Calu3 (cell line): ENCODE measurements at regions of chr2 and their contacts with region 1.

Region 1: DNA sequence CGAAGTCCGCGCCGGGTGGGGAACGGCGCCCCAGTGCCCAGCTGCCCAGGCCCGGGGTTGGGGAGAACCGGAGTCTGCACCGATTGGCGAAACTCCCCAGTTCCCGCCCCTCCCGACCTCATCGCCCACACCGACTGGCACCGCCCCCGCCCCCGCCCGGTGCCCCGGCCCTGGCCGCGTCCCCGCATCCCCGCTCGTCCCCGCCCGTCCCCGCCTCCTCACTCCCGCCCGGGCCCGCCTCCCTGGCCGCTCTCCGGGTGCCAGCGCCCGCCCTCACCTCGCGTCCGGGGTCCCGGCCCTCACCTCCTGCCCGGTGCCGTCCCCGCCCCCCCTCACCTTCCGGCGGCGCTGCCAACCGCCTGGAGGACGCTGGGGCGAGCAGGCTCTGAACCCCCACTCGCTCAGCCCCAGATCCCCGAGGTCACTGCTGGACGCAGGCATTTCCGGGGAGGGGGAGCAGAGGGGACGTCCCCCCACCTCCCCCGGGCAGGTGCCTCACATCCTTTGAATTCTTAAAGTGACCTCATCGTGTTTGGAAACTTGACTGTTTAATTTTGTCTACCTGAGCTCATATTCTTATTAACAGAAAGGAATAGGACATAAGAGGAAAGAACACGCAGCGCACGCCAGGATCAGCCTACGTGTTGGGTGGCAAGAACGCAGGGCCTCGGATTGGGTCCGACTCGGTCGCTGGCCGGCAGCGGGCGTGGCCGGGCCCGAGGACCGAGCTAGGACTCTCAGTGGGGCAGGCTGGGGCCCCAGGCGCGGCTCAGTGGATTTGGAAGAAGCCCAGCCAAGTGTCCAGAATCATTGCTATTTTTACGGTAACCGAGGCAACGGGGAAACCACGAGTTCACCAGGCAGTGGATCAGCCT is at the start of gene FAM110C:
- DNase-seq: peak; percentile 95
- H3K4me3 Mint-ChIP-seq: peak within 1 kb of the TSS; percentile 76
- H3K27ac Mint-ChIP-seq: peak within 1 kb of the TSS; percentile 95
- H3K4me1 Mint-ChIP-seq: peaks cover 43% of the 10 kb centered on the region
- H3K27me3 Mint-ChIP-seq: no peaks in the 10 kb centered on the region
- CTCF ChIP-seq: no peak
- total RNA-seq, gene FAM110C: 17.9 and 20.6 TPM in 2 replicates

Region 2: DNA sequence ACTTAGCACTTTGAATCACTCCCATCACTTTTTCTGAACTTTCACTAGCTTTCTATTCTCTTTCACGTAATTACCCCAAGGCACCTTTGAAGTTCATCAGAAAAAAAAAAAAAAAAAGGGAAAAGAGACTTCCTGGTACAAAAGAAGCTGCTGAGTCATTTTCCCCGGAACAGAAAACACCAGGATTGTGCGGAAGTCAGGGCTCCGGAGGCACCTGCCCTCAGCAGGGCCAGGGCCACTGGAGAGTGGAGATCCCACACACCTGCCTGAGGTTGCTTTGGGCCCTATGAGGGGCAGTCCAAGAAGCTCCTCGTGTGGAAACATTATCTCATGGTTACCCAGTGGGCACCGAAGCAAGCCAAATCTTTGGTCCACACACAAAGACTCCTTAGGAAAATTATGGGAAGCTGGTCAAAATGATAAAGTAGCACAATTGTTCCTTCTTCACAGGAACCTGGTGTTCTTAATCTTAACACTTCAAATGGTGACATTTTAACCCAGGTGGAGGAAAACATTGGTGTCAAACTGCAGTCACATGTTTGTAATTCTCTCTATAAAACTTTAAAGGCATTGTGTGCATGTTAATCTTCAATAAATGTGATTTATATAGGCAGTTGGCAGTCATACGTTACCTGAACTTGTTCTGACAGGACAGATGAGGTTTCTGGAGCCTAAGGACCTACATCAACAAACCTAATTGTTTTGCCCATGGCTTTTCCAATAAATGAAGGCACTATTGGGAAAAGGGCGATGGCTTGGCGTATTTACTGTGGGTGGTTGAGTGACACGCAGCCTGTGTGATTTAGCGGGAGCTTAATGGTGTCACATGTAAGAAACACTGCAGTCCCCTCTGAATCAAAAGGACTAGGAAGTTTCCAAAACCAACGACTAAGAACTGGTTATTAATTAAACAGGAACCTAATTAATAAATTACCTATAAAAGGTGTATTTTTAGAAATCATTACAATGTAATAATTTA is 22.9 kb after region 1 on chr2:
- CTCF ChIA-PET with region 1: interaction called, 3 read pairs
- intact Hi-C with region 1: loop called (anchors 1 kb)
- DNase-seq: peak; percentile 59
- H3K4me3 Mint-ChIP-seq: peak overlapping the region; percentile 8
- H3K27ac Mint-ChIP-seq: no peak overlapping the region
- H3K4me1 Mint-ChIP-seq: no peaks in the 10 kb centered on the region
- H3K27me3 Mint-ChIP-seq: no peaks in the 10 kb centered on the region
- CTCF ChIP-seq: no peak

Region 3: GRCh38 chr2:985317-985898 is 938.7 kb after region 1 on chr2:
- CTCF ChIA-PET with region 1: no interaction called
- intact Hi-C with region 1: no loop called
- DNase-seq: no peak
- H3K4me3 Mint-ChIP-seq: no peak overlapping the region
- H3K27ac Mint-ChIP-seq: no peak overlapping the region
- H3K4me1 Mint-ChIP-seq: no peaks in the 10 kb centered on the region
- H3K27me3 Mint-ChIP-seq: no peaks in the 10 kb centered on the region
- CTCF ChIP-seq: no peak